ENCODE measurements at regions of chr2 and their contacts with region 1.

Region 1: GRCh38 chr2:237572021-237572741 is 5.8 kb downstream of the PRLH start:
- DNase-seq: no peak
- H3K4me3 ChIP-seq: no peak overlapping the region
- H3K27ac ChIP-seq: peak overlapping the region; percentile 47
- H3K4me1 ChIP-seq: peaks cover 22% of the 10 kb centered on the region
- H3K27me3 ChIP-seq: no peaks in the 10 kb centered on the region
- CTCF ChIP-seq: peak; percentile 99 to 100 (median 99)
- POLR2A ChIP-seq: no peak

Region 2: DNA sequence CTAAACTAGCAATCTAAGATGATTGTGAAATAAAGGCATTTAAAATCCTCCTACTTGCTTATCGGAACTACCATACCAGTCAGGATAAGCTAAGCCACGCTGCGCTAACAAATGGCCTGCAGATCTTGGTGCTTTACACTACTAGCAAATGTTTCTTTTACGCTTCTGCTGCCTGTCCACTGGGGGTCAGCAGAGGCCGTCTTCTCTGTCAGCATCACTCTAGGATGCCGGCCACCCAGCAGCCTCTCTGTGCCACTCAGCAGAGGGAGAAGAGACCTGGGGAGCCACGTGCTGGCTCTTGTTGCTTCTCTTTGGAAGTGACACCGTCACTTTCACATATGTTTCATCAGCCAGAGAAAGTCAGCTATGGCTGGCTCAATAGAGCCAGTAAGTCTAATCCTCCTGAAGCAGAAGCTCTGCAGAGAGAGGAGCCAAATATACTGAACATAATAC is 449.9 kb before region 1 on chr2:
- intact Hi-C with region 1: loop called (anchors 10 kb)
- DNase-seq: peak in 1 of 2 donors; percentile 89
- H3K4me3 ChIP-seq: no peak overlapping the region
- H3K27ac ChIP-seq: peak overlapping the region; percentile 73
- H3K4me1 ChIP-seq: peaks cover 21% of the 10 kb centered on the region
- H3K27me3 ChIP-seq: no peaks in the 10 kb centered on the region
- CTCF ChIP-seq: peak in 2 of 3 experiments; percentile 47 to 63
- POLR2A ChIP-seq: no peak

Region 3: DNA sequence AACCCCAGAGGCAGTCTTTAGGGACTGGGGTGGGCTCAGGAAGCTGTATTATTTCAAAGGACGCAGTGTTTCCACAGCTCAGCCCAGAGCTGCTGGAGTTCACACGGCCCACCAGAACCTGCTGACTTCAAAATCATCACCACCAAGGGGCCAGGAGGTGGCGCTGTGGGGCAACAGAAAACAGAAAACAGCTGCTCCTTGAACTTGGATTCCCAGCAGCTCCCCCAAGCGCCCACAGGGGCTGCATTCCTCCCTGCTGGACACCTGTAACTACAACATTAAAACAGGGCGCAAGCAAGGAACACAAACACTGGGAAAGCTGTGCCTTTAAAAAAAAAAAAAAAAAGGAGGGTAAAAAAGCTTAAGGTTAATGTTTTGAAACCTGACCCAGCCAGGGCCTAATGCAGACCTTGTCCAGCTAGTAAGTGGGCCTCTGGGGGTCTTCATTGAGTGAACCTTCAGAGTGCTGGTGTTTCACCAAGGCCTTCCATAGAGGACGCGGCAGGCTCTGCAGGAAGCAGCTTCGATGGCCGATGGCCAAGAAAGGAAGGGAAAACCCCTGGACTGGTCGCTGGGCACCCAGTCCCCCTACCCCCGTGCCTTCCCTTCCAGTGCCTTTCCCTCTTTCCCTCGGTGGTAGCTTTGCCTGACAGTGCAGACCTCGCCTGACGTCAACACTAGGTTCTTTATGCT is 59.3 kb before region 1 on chr2:
- intact Hi-C with region 1: loop called (anchors 2 kb)
- DNase-seq: no peak
- H3K4me3 ChIP-seq: no peak overlapping the region
- H3K27ac ChIP-seq: peak overlapping the region; percentile 88
- H3K4me1 ChIP-seq: peaks cover 61% of the 10 kb centered on the region
- H3K27me3 ChIP-seq: no peaks in the 10 kb centered on the region
- CTCF ChIP-seq: peak; percentile 86 to 93 (median 88)
- POLR2A ChIP-seq: no peak